AG04450 (cell line): ENCODE measurements at regions of chr15 and their contacts with region 1.

Region 1: GRCh38 chr15:72722071-72722696 is 36.2 kb downstream of the BBS4 start:
- DNase-seq: peak; percentile 47
- H3K4me3 ChIP-seq: no peak overlapping the region
- H3K27ac ChIP-seq: no peak overlapping the region
- H3K27me3 ChIP-seq: no peaks in the 10 kb centered on the region
- CTCF ChIP-seq: peak; percentile 79

Region 2: DNA sequence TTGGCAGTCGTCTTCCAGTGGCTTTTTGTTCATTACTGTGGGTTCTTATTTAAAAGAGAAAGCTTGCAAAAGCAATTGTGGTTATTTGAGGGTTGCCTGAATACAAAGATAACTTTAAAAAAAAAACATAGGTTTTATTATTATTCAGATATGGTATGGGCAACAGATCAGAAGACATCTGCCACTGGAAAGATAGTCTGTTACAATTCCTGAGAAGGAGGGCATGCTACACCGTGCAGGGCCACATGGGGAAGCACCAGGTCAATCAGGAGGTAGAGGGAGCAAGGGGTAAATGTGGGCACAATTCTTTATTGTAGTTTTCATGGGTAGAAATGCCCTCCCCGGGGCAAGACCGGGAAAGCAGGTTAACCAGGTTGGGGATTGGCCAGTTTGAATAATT is 10.3 kb after region 1 on chr15:
- CTCF ChIA-PET with region 1: interaction called, 73 read pairs
- POLR2A ChIA-PET with region 1: no interaction called
- DNase-seq: no peak
- H3K4me3 ChIP-seq: no peak overlapping the region
- H3K27ac ChIP-seq: no peak overlapping the region
- H3K27me3 ChIP-seq: no peaks in the 10 kb centered on the region
- CTCF ChIP-seq: no peak

Region 3: DNA sequence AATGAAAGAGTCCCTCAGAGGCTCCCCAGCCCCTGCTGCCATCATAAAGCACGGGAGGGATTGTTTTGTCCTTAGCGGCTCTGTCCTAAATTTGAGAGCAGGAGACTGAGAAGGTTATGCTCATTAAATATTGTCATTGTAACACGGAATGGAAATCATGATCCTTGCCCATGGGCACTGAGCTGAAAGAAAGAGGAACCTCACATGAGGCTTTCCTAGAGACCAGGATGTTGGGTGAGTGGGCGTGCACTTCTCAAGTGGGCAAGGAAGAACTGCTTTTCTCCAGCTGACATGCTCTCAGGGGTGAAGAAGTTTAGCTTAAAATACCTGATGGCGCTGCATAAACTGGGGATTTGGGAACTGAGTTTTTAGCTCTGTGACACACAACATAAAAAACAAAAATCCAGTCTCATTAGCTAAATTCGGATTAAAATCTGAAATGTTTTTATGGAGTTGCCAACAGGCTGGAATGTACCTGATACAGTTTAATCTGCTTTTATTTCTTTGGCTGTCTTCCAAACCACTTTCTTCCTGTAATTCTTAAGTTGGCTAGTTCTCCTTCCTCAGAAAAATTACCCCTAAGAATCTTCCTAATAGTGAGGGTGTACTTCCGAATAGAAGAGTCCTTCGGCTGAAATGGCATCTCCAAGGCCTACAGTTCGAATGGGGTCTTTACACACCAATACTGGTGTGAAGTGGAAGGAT is 29.7 kb after region 1 on chr15:
- CTCF ChIA-PET with region 1: interaction called, 21 read pairs
- POLR2A ChIA-PET with region 1: no interaction called
- DNase-seq: no peak
- H3K4me3 ChIP-seq: no peak overlapping the region
- H3K27ac ChIP-seq: no peak overlapping the region
- H3K27me3 ChIP-seq: no peaks in the 10 kb centered on the region
- CTCF ChIP-seq: no peak

Region 4: DNA sequence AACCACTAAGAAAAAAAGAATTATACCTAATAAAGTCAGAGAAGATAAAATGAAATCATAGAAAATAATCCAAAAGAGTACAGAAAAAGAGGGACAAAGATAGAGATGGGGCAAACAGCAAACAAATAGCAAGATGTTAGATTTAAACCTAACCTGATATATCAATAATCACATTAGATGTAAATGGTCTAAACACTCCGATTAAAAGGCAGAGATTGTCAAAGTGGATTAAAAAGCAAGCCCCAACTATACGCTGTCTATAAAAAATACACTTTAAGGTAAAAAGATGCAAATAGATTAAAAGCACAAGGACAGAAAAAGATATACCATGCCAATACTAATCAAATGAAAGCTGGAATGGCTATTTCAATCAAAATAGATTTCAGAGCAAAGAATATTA is 44.6 kb after region 1 on chr15:
- CTCF ChIA-PET with region 1: interaction called, 10 read pairs
- POLR2A ChIA-PET with region 1: no interaction called
- DNase-seq: no peak
- H3K4me3 ChIP-seq: no peak overlapping the region
- H3K27ac ChIP-seq: no peak overlapping the region
- H3K27me3 ChIP-seq: no peaks in the 10 kb centered on the region
- CTCF ChIP-seq: no peak

Region 5: GRCh38 chr15:72998681-72999466 is 276.7 kb after region 1 on chr15:
- CTCF ChIA-PET with region 1: no interaction called
- POLR2A ChIA-PET with region 1: no interaction called
- DNase-seq: no peak
- H3K4me3 ChIP-seq: no peak overlapping the region
- H3K27ac ChIP-seq: no peak overlapping the region
- H3K27me3 ChIP-seq: peaks cover 5% of the 10 kb centered on the region
- CTCF ChIP-seq: no peak

Region 6: DNA sequence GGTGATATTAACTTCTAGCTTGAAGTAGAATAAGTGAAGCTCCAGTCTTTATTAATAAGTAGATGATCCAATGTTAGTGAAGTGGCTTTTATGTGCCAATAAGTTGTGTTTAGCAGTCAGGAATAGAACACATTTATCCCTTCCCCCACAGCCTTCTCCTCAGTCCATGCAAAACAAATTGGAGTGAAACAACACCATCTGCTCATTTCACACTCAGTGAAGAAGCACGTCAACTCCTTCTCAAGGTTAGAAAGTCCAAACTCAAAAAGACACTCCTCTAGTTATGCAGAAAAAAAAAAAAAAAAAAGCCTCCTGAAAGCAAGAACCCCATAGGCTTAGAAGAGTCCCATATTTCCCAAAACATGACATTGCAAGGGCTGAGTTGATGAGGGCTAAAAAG is 312.0 kb after region 1 on chr15:
- CTCF ChIA-PET with region 1: no interaction called
- POLR2A ChIA-PET with region 1: no interaction called
- DNase-seq: no peak
- H3K4me3 ChIP-seq: no peak overlapping the region
- H3K27ac ChIP-seq: no peak overlapping the region
- H3K27me3 ChIP-seq: peaks cover 8% of the 10 kb centered on the region
- CTCF ChIP-seq: no peak

Region 7: DNA sequence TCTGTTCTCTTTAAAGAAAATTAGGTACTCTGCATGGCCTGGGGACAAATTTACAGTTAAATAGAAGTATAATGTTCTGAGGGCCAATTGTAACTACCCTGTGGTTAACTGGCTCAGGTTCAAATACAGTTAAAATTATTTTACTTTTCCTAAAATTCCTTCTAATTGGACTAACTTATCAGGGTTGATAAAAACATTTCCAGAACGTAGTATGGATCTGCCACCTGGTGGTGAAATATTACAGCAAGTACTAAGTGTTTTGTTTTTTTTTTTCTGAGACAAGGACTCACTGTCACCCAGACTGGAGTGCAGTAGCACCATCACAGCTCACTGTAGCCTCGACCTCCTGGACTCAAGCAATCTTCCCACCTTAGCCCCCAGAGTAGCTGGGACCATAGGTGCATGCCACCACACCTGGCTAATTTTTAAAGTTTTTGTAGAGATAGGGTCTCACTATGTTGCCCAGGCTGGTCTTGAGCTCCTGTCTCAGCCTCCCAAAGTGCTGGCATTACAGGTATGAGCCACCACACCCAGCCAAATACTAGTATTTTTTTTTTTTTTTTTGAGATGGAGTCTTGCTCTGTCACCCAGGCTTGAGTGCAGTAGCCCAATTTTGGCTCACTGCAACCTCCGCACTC is 359.3 kb after region 1 on chr15:
- CTCF ChIA-PET with region 1: interaction called, 54 read pairs
- POLR2A ChIA-PET with region 1: no interaction called
- DNase-seq: peak; percentile 26
- H3K4me3 ChIP-seq: no peak overlapping the region
- H3K27ac ChIP-seq: no peak overlapping the region
- H3K27me3 ChIP-seq: peaks cover 2% of the 10 kb centered on the region
- CTCF ChIP-seq: peak; percentile 70

Region 8: DNA sequence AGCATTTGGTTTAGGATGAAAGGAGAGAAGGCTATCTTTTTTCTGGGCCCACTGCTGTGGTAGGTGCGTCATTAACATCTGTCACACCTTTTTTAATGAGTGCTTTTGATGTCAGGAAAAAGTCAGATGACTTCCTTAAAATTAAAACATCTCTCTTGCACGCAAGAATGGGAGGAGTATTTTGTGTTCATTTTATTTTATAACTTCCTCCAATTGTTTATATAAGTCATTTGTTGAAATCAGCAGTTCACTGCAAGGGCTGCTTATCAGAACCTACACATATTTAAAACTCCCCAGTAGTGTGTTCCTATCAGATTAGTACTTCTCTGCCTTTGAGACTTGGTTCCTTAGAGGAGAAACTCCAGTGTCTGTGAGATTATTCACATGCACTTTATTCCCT is 473.9 kb after region 1 on chr15:
- CTCF ChIA-PET with region 1: no interaction called
- POLR2A ChIA-PET with region 1: no interaction called
- DNase-seq: no peak
- H3K4me3 ChIP-seq: no peak overlapping the region
- H3K27ac ChIP-seq: no peak overlapping the region
- H3K27me3 ChIP-seq: no peaks in the 10 kb centered on the region
- CTCF ChIP-seq: no peak